ENCODE measurements at regions of chr13 and their contacts with region 1.

Region 1: DNA sequence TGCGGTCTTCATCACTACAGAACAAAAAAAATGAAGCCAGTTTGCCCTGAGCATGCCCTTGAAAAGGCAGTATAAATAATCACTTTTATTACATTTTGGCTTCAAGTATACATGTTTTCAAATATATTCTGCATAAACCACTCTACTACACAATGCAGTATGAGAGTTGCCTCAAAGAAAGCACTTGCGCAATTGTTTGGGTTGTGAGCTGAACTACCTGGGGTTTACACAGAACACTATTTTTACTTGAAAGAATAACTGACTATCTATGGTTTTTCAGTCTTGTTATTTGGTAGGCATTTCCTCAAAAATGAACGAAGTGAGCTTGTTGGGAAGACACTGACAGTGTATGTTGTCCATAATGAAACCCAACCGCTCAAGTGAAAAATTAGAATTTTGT is 264.4 kb upstream of the KLF12 start:
- DNase-seq: no peak
- H3K4me3 ChIP-seq: no peak overlapping the region
- H3K27ac ChIP-seq: no peak overlapping the region
- H3K4me1 ChIP-seq: no peaks in the 10 kb centered on the region
- H3K27me3 ChIP-seq: no peaks in the 10 kb centered on the region
- CTCF ChIP-seq: no peak

Region 2: GRCh38 chr13:74080762-74081161 is 317.8 kb before region 1 on chr13:
- CTCF ChIA-PET with region 1: no interaction called
- dilution Hi-C with region 1: no loop called
- in situ Hi-C with region 1: no loop called
- intact Hi-C with region 1: no loop called
- DNase-seq: no peak
- H3K4me3 ChIP-seq: no peak overlapping the region
- H3K27ac ChIP-seq: no peak overlapping the region
- H3K4me1 ChIP-seq: no peaks in the 10 kb centered on the region
- H3K27me3 ChIP-seq: no peaks in the 10 kb centered on the region
- CTCF ChIP-seq: no peak

Region 3: DNA sequence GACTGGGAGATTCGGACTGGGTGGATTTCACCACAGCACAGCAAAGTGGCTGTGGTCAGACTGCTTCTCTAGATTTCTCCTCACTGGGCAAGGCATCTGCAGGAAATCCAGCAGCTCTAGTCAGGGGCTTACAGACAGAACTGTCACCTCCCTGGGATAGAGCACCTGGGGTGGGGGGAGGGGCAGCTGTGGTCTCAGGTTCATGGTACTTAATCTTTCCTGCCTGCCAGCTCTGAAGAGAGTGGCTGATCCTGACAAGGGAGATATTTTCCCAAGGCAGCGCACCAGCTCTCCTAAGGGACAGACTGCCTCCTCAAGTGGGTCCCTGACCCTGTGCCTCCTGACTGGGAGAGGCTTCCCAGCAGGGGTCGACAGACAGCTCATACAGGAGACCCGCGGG is 51.6 kb before region 1 on chr13:
- CTCF ChIA-PET with region 1: no interaction called
- dilution Hi-C with region 1: loop called (anchors 5 kb)
- in situ Hi-C with region 1: no loop called
- intact Hi-C with region 1: no loop called
- DNase-seq: no peak
- H3K4me3 ChIP-seq: no peak overlapping the region
- H3K27ac ChIP-seq: no peak overlapping the region
- H3K4me1 ChIP-seq: no peaks in the 10 kb centered on the region
- H3K27me3 ChIP-seq: no peaks in the 10 kb centered on the region
- CTCF ChIP-seq: no peak

Region 4: DNA sequence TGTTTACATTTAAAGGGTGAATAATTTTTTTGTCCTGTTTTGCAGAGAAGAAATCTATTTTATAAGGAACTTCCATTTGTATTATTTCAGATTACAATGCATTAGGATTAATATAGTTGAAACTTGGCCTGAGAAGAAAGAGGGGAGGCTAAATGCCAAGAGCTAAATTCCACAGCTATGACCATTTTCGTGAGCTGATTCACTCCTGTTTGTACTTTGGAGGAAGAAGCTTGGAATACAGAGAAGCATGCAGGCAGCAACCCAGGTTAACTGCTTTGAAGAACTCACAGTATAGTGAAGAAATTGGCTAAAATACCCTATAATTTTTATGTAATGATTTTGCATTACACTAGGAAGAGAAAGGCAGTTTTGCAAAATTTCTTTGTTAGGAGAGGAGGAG is 45.0 kb after region 1 on chr13:
- CTCF ChIA-PET with region 1: no interaction called
- dilution Hi-C with region 1: no loop called
- in situ Hi-C with region 1: no loop called
- intact Hi-C with region 1: no loop called
- DNase-seq: peak; percentile 79
- H3K4me3 ChIP-seq: peak overlapping the region in 2 of 3 experiments; percentile 28
- H3K27ac ChIP-seq: peak overlapping the region; percentile 85
- H3K4me1 ChIP-seq: peaks cover 34% of the 10 kb centered on the region
- H3K27me3 ChIP-seq: no peaks in the 10 kb centered on the region
- CTCF ChIP-seq: no peak

Region 5: GRCh38 chr13:74511523-74511922 is 112.9 kb after region 1 on chr13:
- CTCF ChIA-PET with region 1: no interaction called
- dilution Hi-C with region 1: no loop called
- in situ Hi-C with region 1: no loop called
- intact Hi-C with region 1: no loop called
- DNase-seq: no peak
- H3K4me3 ChIP-seq: no peak overlapping the region
- H3K27ac ChIP-seq: no peak overlapping the region
- H3K4me1 ChIP-seq: no peaks in the 10 kb centered on the region
- H3K27me3 ChIP-seq: peaks cover 3% of the 10 kb centered on the region
- CTCF ChIP-seq: no peak

Region 6: DNA sequence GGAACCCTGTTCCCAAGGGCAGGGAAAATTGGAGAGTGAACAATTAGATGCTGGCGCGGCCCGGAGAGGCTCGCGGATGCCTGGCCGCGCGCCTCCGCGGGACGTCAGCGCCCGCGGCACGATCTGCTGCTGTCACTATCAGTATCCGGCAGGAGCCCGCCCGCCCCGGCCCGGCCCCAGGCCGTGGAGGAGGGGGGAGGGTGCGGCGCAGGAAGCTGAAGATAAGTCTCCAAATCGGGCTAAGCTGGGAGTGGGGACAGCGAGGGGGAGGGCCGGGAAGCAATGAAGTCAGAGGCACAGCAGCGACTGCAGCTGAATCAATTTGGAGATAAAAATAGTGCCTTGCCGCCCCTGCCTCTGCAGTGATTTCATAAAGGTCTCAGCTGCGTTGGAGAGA is 177.1 kb after region 1 on chr13:
- CTCF ChIA-PET with region 1: no interaction called
- dilution Hi-C with region 1: no loop called
- in situ Hi-C with region 1: no loop called
- intact Hi-C with region 1: no loop called
- DNase-seq: peak; percentile 5
- H3K4me3 ChIP-seq: peak overlapping the region; percentile 26 to 36 (median 27)
- H3K27ac ChIP-seq: no peak overlapping the region
- H3K4me1 ChIP-seq: no peaks in the 10 kb centered on the region
- H3K27me3 ChIP-seq: peaks cover 6% of the 10 kb centered on the region
- CTCF ChIP-seq: no peak

Measured in mammary epithelial cell (primary cell).